HEK293 (cell line): ENCODE measurements at regions of chr1 and their contacts with region 1.

Region 1: DNA sequence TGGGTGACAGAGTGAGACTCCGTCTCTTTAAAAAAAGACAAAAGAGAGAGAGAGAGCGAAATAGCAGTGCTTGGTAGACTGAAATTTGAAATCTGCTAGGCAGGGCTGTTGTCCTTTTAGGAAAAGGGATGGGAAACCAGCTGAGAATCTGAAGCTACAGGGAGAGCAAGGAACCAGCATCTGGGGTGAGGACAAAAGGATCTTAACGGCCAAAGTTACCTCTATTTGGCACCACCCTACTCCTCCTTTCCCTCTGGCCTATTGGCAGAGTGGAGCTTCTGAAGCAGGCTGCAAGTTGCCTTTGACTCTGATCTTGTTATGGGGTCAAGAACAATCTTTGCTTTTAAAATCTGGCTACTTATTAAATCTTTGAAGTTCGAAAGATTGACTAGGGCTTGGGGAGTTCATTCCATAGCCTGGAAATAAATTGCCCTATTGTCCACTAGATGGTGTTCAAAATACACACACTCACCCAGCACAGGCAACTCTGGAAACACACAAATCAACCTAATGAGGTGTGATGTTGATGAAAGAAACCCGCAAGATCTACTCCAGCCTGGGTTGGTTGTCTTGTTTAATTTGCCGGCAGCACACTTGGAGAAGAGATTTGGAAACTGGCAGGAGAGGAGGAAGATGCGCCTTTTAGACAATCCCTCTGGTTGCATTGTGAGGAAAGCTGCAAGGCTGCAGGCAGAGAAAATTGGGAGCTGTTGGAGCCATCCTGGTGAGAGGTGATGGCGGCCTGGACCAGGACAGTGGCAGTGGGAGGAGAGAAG is 16.5 kb upstream of the PARP1 start:
- H3K4me3 ChIP-seq: no peak overlapping the region
- H3K27ac ChIP-seq: no peak overlapping the region
- H3K4me1 ChIP-seq: peaks cover 3% of the 10 kb centered on the region
- CTCF ChIP-seq: peak; percentile 88

Region 2: GRCh38 chr1:226370144-226370923 is 54.1 kb before region 1 on chr1:
- CTCF ChIA-PET with region 1: no interaction called
- POLR2A ChIA-PET with region 1: no interaction called
- H3K4me3 ChIP-seq: no peak overlapping the region
- H3K27ac ChIP-seq: no peak overlapping the region
- H3K4me1 ChIP-seq: no peaks in the 10 kb centered on the region
- CTCF ChIP-seq: no peak

Region 3: DNA sequence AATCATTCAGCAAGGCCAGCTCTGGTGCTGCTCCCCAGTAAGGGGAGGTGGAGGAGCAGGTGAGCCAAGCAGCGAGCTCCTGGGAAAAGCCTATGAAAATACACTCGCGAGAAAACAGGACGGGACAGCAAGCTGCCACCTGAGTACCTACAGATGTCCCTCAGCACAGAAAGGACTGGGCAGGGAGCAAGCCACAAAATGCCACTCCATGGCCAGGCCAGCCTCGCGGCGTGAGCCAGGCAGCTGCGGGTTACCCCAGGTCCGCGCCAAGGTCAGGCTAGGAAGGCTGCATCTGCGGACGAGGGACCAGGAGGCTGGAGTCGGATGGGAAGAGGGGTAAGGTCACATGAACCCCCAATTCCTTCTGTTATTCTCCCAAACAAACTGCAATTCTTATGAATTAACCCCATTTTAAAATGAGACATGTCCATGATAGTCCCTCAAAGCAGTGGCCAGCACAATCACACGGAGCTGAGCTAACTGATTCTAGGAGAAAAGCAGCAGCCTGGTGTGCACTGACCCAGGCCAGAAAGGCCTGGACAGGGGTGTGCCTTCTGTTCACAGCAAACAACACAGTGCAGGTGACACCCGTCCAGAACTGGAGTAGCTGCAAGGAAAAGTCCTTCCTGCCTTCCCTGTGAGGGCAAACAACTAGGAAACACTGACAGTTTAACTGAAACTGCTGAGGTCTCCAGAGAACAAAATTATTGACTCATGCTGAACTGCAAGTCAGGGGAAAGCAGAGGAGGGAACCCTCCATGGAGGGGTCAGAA is 43.0 kb before region 1 on chr1:
- CTCF ChIA-PET with region 1: no interaction called
- POLR2A ChIA-PET with region 1: no interaction called
- H3K4me3 ChIP-seq: no peak overlapping the region
- H3K27ac ChIP-seq: no peak overlapping the region
- H3K4me1 ChIP-seq: no peaks in the 10 kb centered on the region
- CTCF ChIP-seq: no peak

Region 4: GRCh38 chr1:226414098-226414698 is 10.2 kb before region 1 on chr1:
- CTCF ChIA-PET with region 1: interaction called, 125 read pairs
- POLR2A ChIA-PET with region 1: interaction called, 3 read pairs
- H3K4me3 ChIP-seq: no peak overlapping the region
- H3K27ac ChIP-seq: no peak overlapping the region
- H3K4me1 ChIP-seq: no peaks in the 10 kb centered on the region
- CTCF ChIP-seq: no peak

Region 5: GRCh38 chr1:226474443-226475141 is 50.2 kb after region 1 on chr1:
- CTCF ChIA-PET with region 1: interaction called, 10 read pairs
- POLR2A ChIA-PET with region 1: no interaction called
- H3K4me3 ChIP-seq: no peak overlapping the region
- H3K27ac ChIP-seq: no peak overlapping the region
- H3K4me1 ChIP-seq: peaks cover 3% of the 10 kb centered on the region; the same call in 1 of the 2 replicates
- CTCF ChIP-seq: no peak

Region 6: GRCh38 chr1:226569879-226570547 is 145.6 kb after region 1 on chr1:
- CTCF ChIA-PET with region 1: interaction called, 25 read pairs
- POLR2A ChIA-PET with region 1: no interaction called
- H3K4me3 ChIP-seq: no peak overlapping the region
- H3K27ac ChIP-seq: no peak overlapping the region
- H3K4me1 ChIP-seq: 0 out of 2 replicates have a peak, but pooled peaks cover 2% of the 10 kb centered on the region
- CTCF ChIP-seq: peak; percentile 76; the same call in 1 of the 2 replicates

Region 7: GRCh38 chr1:226608699-226609505 is 184.5 kb after region 1 on chr1:
- CTCF ChIA-PET with region 1: interaction called, 44 read pairs
- POLR2A ChIA-PET with region 1: no interaction called
- H3K4me3 ChIP-seq: no peak overlapping the region
- H3K27ac ChIP-seq: no peak overlapping the region
- H3K4me1 ChIP-seq: no peaks in the 10 kb centered on the region
- CTCF ChIP-seq: peak; percentile 68; the same call in 1 of the 2 replicates